Activated T-helper 2 cell treated with anti-CD3 and anti-CD28 coated beads, Interferon-gamma antibody, Interleukin-2, Interleukin-4, amounts not matched to agents 10 μg/mL and 5 μg/mL and 100 μg/mL, durations not matched to agents 14 hours and 24 hours and 36 hours (primary cell): ENCODE measurements at regions of chr13 and their contacts with region 1.

Region 1: DNA sequence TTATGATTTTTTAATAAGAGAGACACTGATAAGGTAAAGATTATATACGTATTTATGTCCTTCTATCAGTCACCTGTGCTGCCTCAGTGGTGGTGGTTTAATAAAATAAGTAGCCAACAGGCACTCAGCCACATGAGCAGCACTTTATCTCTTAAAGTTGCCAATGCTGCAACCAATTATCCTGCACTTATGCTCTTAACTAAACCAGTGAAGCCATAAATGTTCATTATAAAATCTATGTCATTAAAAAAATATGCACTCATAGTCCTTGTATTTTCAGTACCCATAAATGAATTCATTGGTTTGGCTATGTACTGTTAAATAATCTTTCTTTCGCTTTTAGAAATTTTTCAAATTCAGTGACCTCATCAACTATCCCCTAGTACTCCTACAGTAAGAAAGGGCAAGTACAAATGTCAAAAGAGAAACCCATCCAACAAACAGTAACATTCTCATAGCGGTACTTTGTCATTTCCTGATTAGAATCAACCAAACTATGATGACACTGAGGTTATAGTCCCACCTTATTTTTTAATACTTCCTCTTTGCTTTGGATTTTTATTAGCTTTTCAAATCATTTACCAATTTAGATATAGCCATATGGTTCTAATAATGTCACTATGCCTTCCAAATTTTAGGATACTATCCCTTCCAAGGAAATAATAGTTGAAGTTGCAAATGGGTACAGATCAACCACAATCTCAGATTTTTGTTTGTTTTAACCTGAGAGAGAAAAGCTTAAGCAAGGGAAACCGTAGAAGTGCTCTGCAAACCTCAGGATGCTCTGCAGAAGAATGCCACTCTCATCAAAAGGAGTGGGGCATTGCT is 190.9 kb downstream of the KLF12 start:
- DNase-seq: no peak
- H3K4me3 Mint-ChIP-seq: peak overlapping the region; percentile 24
- H3K27ac Mint-ChIP-seq: peak overlapping the region; percentile 82
- H3K4me1 Mint-ChIP-seq: peaks cover 47% of the 10 kb centered on the region
- H3K27me3 Mint-ChIP-seq: no peaks in the 10 kb centered on the region

Region 2: DNA sequence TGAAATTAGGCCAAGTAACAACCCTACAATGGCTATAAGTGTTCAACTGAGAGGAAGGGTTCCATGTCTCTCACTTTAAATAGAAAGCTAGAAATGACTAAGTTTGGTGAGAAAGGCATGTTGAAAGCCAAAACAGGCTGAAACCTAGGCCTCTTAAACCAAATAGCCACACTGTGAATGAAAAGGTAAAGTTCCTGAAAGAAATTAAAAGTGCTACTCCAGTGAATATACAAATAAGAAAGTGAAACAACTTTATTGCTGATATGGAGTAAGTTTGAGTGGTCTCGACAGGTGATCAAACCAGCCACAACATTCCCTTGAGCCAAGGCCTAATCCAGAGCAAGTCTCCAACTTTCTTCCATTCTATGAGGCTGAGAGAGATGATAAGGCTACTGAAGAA is 18.7 kb before region 1 on chr13:
- intact Hi-C with region 1: loop called (anchors 1 kb)
- DNase-seq: no peak
- H3K4me3 Mint-ChIP-seq: no peak overlapping the region
- H3K27ac Mint-ChIP-seq: peak overlapping the region; percentile 72
- H3K4me1 Mint-ChIP-seq: peaks cover 58% of the 10 kb centered on the region
- H3K27me3 Mint-ChIP-seq: no peaks in the 10 kb centered on the region

Region 3: GRCh38 chr13:73932091-73932490 is 11.3 kb before region 1 on chr13:
- intact Hi-C with region 1: loop called (anchors 1 kb)
- DNase-seq: no peak
- H3K4me3 Mint-ChIP-seq: no peak overlapping the region
- H3K27ac Mint-ChIP-seq: peak overlapping the region; percentile 68
- H3K4me1 Mint-ChIP-seq: peaks cover 37% of the 10 kb centered on the region
- H3K27me3 Mint-ChIP-seq: no peaks in the 10 kb centered on the region

Region 4: GRCh38 chr13:73984949-73985691 is 41.8 kb after region 1 on chr13:
- intact Hi-C with region 1: loop called (anchors 2 kb)
- DNase-seq: peak; percentile 30
- H3K4me3 Mint-ChIP-seq: peak overlapping the region; percentile 65
- H3K27ac Mint-ChIP-seq: peak overlapping the region; percentile 80
- H3K4me1 Mint-ChIP-seq: peaks cover 33% of the 10 kb centered on the region
- H3K27me3 Mint-ChIP-seq: no peaks in the 10 kb centered on the region

Region 5: GRCh38 chr13:74062933-74063332 is 119.6 kb after region 1 on chr13:
- intact Hi-C with region 1: no loop called
- DNase-seq: no peak
- H3K4me3 Mint-ChIP-seq: peak overlapping the region; percentile 79
- H3K27ac Mint-ChIP-seq: peak overlapping the region; percentile 93
- H3K4me1 Mint-ChIP-seq: peaks cover 64% of the 10 kb centered on the region
- H3K27me3 Mint-ChIP-seq: no peaks in the 10 kb centered on the region

Region 6: GRCh38 chr13:74115138-74115537 is 171.8 kb after region 1 on chr13:
- intact Hi-C with region 1: loop called (anchors 5 kb)
- DNase-seq: no peak
- H3K4me3 Mint-ChIP-seq: no peak overlapping the region
- H3K27ac Mint-ChIP-seq: no peak overlapping the region
- H3K4me1 Mint-ChIP-seq: peaks cover 52% of the 10 kb centered on the region
- H3K27me3 Mint-ChIP-seq: no peaks in the 10 kb centered on the region

Region 7: GRCh38 chr13:74145249-74145975 is 202.1 kb after region 1 on chr13:
- intact Hi-C with region 1: no loop called
- DNase-seq: no peak
- H3K4me3 Mint-ChIP-seq: no peak overlapping the region
- H3K27ac Mint-ChIP-seq: no peak overlapping the region
- H3K4me1 Mint-ChIP-seq: no peaks in the 10 kb centered on the region
- H3K27me3 Mint-ChIP-seq: peaks cover 30% of the 10 kb centered on the region

Region 8: GRCh38 chr13:74243637-74244526 is 300.5 kb after region 1 on chr13:
- intact Hi-C with region 1: loop called (anchors 5 kb)
- DNase-seq: no peak
- H3K4me3 Mint-ChIP-seq: peak overlapping the region; percentile 11
- H3K27ac Mint-ChIP-seq: peak overlapping the region; percentile 73
- H3K4me1 Mint-ChIP-seq: peaks cover 46% of the 10 kb centered on the region
- H3K27me3 Mint-ChIP-seq: peaks cover 15% of the 10 kb centered on the region

Region 9: DNA sequence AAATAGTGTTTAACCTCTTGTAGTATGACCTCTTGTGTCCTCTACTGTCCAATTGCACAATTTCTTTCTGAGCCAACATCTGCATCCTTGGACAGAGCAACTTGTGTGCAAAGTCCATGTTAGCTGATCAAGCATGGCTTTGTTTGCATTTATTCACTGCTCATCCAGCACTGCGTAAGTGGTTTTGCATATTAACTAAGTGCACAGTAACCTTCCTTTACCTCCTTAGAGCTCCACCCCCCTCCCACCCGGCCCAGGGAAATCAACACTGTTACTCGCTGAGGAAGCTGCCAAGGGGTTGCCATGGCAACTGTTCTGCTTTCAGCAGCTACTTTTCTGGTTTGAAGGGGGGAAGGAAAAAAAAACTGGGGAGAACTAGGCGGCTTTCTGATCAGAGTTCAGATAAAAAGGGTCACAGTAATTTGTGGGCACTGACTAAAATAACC is 344.4 kb after region 1 on chr13:
- intact Hi-C with region 1: loop called (anchors 5 kb)
- DNase-seq: peak; percentile 71
- H3K4me3 Mint-ChIP-seq: peak overlapping the region; percentile 15
- H3K27ac Mint-ChIP-seq: peak overlapping the region; percentile 33
- H3K4me1 Mint-ChIP-seq: peaks cover 33% of the 10 kb centered on the region
- H3K27me3 Mint-ChIP-seq: peaks cover 20% of the 10 kb centered on the region